Right ventricle myocardium inferior (tissue), 1 donor: ENCODE measurements at regions of chr1 and their contacts with region 1.

Region 1: DNA sequence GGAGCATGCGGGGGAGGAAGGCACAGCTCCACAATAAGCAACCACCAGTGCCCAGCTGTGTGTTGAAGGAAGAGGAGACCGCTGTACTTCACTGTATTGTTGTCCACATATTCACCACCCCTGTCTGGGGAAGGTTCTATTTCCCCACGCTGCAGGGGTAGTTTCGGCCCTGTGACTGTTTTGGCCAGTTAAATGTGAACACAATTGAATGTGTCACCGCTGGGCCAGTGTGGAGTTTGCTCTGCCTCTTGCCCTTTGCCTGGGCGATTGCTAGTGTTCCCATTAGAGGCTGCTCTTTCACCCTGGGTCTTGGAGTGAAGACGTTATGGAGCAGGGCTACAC is 32.6 kb downstream of the UBE4B start:
- DNase-seq: no peak
- ATAC-seq: no peak

Region 2: DNA sequence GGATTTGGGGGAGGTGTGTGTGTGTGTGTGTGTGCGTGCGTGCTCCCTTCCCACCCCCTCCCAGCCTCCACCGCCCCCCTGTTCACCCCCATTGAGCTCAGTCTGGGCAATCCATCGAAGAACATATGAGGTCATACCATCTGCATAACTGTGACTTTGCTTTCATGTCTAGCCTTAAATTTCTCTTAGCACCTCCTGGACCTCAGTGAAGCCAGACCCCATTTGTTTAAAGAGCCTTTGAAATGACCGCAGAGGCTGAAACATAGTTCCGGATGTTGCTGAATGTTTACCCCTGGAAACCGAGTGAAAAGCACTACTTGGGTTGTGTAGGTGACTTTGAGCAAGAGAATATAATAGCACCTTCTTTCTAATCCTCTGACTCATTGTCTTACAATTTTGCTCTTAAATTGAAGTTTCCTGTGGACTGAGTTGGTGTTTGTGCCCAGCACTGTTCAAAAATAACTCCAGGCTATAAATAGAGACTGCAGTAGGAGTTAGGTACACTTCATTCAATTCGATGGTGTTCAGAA is 42.9 kb after region 1 on chr1:
- intact Hi-C with region 1: loop called (anchors 5 kb)
- DNase-seq: no peak
- ATAC-seq: peak; percentile 61